AG04450 (cell line): ENCODE measurements at regions of chr2 and their contacts with region 1.

Region 1: GRCh38 chr2:158745044-158745865 is 49.9 kb upstream of the DAPL1 start:
- DNase-seq: peak; percentile 39
- H3K4me3 ChIP-seq: no peak overlapping the region
- H3K27ac ChIP-seq: peak overlapping the region; percentile 11
- H3K27me3 ChIP-seq: peaks cover 23% of the 10 kb centered on the region
- CTCF ChIP-seq: peak; percentile 70

Region 2: DNA sequence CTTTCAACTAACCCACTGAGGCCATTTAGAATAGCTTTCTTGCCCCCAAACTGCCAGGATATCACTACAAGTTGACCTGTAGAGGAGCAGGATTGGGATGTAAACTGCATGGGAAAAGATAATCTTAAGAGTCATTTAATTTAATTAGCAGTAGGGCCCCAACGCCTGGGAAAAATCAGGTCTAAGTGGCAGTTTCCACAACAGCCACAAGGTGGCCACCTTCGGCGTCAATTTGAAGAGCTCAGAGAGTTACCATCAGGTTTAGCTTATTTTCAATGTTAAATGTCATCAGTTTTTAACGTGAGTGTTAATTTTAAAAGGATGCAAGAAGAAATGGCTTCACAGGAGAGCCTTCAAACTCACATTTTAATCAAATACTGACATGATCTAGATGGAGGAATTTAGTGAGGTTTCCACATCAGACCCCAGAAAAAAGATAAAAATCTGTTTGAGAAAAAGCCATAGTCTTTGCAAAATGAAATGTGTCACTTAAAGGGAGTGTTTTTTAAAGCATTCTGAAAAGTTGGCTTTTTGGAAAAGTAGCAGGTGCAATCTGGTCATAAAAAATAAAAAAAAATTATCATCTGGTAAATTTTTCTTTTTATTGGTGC is 720.9 kb before region 1 on chr2:
- CTCF ChIA-PET with region 1: interaction called, 177 read pairs
- POLR2A ChIA-PET with region 1: no interaction called
- DNase-seq: no peak
- H3K4me3 ChIP-seq: no peak overlapping the region
- H3K27ac ChIP-seq: no peak overlapping the region
- H3K27me3 ChIP-seq: no peaks in the 10 kb centered on the region
- CTCF ChIP-seq: peak; percentile 87

Region 3: DNA sequence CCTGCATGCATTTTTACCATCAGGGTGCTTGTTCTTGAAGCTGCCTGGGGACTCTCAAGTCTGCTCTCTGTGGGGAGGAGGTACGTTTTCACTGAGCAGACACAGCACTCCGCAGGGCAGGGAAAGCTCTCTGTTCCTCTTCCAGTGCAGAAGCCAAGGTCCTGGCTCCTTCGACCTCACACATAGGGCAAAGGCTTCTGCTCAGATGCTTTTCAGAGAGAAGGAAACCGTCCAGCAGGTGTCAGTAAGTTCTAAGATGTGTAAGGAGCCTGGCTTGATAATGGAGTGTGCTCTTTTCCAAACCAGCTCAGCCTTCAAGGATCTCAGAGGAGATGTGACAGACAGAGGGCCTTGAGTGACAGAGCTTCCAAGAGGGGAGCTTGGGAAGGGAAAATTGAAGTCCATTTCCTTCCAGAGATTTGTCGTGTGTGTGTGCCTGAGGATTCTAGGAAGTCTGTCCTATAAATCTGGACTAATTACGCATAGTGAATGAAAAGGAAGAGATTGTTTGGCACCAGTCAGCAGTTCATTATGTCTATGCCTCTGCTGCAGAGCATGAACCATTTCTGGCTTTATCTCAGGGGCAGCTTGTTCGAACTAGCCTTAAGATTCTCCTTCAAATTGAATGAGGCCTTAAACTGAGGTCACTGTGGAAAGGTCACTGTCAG is 710.9 kb before region 1 on chr2:
- CTCF ChIA-PET with region 1: interaction called, 16 read pairs
- POLR2A ChIA-PET with region 1: no interaction called
- DNase-seq: no peak
- H3K4me3 ChIP-seq: no peak overlapping the region
- H3K27ac ChIP-seq: no peak overlapping the region
- H3K27me3 ChIP-seq: peaks cover 11% of the 10 kb centered on the region
- CTCF ChIP-seq: peak; percentile 51

Region 4: DNA sequence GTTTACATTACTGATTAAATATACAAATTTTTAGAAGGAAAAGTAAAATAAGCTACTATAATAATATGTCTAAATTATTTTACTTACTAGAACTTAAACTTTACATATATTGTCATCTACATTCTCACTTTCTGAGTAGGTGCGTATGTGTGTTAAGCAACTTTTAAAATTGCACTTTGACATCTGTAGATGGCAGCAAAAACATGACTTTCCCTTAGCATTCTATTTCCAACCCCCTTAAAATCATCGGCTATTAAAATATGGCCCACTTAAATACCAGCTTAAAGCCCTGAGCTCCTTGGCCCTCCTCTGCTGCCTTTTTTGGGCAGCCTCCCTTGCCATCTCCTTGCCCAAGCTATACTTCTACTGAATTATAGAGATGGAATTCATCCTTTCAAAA is 565.6 kb before region 1 on chr2:
- CTCF ChIA-PET with region 1: interaction called, 52 read pairs
- POLR2A ChIA-PET with region 1: no interaction called
- DNase-seq: no peak
- H3K4me3 ChIP-seq: no peak overlapping the region
- H3K27ac ChIP-seq: no peak overlapping the region
- H3K27me3 ChIP-seq: no peaks in the 10 kb centered on the region
- CTCF ChIP-seq: peak; percentile 51

Region 5: GRCh38 chr2:158456309-158457066 is 288.8 kb before region 1 on chr2 and contains the starts of genes CCDC148 and PKP4:
- CTCF ChIA-PET with region 1: interaction called, 19 read pairs
- POLR2A ChIA-PET with region 1: interaction called, 5 read pairs
- DNase-seq: peak; percentile 76
- H3K4me3 ChIP-seq: peak within 1 kb of the TSS; percentile 86
- H3K27ac ChIP-seq: peak within 1 kb of the TSS; percentile 62
- H3K27me3 ChIP-seq: no peaks in the 10 kb centered on the region
- CTCF ChIP-seq: peak; percentile 22
- polyA plus RNA-seq, gene CCDC148: 0.12 and 0.22 TPM in 2 replicates
- polyA plus RNA-seq, gene PKP4: 20.4 and 24.9 TPM in 2 replicates

Region 6: DNA sequence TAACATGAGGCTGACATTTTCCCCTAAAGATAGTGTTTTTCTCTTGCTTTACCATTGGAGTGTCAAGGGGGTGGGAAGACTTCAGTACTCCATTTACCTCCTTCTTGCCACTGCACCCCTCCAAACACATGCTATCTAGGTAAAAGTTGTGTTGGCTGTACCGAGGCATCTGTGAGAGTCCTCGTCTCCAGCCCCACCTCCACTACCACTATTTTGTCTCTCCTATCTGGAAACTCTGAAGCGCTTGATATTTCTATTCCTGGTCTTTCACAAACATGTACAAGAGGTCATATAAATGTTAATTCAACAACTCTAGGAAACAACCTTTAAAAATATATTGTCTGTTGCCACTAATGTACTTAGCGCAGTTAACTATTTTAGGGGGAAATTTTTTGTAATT is 156.0 kb before region 1 on chr2:
- CTCF ChIA-PET with region 1: no interaction called
- POLR2A ChIA-PET with region 1: no interaction called
- DNase-seq: no peak
- H3K4me3 ChIP-seq: no peak overlapping the region
- H3K27ac ChIP-seq: no peak overlapping the region
- H3K27me3 ChIP-seq: no peaks in the 10 kb centered on the region
- CTCF ChIP-seq: no peak

Region 7: DNA sequence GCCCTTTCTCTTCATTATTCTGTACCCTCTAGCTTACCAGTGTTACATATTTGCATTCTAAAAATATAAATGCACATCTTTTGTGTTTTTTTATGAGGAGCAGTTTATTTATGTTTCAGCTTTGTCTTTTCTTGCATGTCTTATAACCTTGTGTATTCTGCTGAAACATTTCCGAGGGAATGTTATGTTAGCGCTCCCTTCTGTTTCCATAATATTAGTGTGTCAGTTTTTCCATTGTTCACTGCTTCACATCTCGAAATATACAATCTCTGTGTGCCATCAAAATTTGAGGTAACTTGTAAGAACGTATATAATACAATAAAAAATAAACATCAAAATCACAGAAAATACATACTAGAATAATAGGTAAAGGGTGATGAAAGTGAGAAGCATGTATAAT is 135.2 kb before region 1 on chr2:
- CTCF ChIA-PET with region 1: no interaction called
- POLR2A ChIA-PET with region 1: no interaction called
- DNase-seq: no peak
- H3K4me3 ChIP-seq: no peak overlapping the region
- H3K27ac ChIP-seq: no peak overlapping the region
- H3K27me3 ChIP-seq: no peaks in the 10 kb centered on the region
- CTCF ChIP-seq: no peak

Region 8: DNA sequence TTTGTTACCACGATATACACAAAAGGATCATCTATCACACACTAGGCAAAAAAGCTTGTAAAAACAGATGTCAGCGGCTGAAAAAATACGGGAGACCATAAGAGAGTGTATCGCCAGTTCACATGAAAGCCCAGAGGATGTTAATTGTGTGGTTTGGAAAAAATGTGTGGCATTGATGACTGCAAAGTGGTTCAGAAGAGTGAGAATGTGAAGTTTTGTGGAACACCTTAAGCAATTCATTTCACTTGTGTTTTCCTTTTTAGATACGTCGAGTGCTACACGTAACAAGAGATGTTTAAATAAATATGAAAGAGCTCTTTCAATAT is 11.9 kb before region 1 on chr2:
- CTCF ChIA-PET with region 1: interaction called, 20 read pairs
- POLR2A ChIA-PET with region 1: no interaction called
- DNase-seq: no peak
- H3K4me3 ChIP-seq: no peak overlapping the region
- H3K27ac ChIP-seq: no peak overlapping the region
- H3K27me3 ChIP-seq: peaks cover 18% of the 10 kb centered on the region
- CTCF ChIP-seq: no peak